Ovary (tissue), 10 donors: ENCODE measurements at regions of chr13 and their contacts with region 1.

Region 1: GRCh38 chr13:66835040-66835628 is 395.0 kb downstream of the PCDH9 start:
- DNase-seq: peak; percentile 49 to 71 (median 60)
- H3K4me3 ChIP-seq: no peak overlapping the region
- H3K27ac ChIP-seq: no peak overlapping the region
- H3K4me1 ChIP-seq: peaks cover 1% of the 10 kb centered on the region
- H3K27me3 ChIP-seq: no peaks in the 10 kb centered on the region
- CTCF ChIP-seq: no peak
- EP300 ChIP-seq: no peak
- POLR2A ChIP-seq: no peak

Region 2: DNA sequence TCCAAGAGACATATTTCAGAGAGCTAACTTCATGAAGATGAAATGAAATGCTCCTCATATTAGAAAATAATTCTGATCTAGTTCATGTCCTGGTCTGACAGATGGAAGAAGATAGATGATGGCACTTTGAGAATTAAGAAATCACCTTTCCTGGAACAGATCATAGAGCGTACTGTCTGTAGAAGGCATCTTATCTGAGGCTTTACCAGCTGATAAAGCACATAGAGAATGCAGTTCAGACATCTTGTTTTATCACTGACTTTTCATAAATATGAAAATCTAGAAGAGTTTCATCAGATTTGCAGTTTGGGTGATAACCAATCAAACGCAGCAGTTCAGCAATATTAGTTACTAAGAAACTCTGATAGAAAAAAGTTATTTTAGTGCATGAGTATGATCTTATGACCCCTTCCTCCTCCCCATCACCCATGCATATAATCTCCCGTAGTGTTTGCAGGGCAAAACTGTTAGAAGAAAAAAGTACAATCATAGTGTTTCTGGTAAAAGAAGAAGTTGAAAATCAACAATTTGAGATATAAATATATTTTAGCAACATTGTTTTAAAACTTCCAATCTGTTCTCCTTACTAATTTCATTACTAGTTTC is 190.2 kb before region 1 on chr13:
- intact Hi-C with region 1: loop called in 1 of 4 experiments (anchors 5 kb)
- DNase-seq: no peak
- H3K4me3 ChIP-seq: no peak overlapping the region
- H3K27ac ChIP-seq: no peak overlapping the region
- H3K4me1 ChIP-seq: no peaks in the 10 kb centered on the region
- H3K27me3 ChIP-seq: no peaks in the 10 kb centered on the region
- CTCF ChIP-seq: no peak
- EP300 ChIP-seq: no peak
- POLR2A ChIP-seq: no peak